GM10248 (cell line): ENCODE measurements at regions of chr5 and their contacts with region 1.

Region 1: GRCh38 chr5:160021831-160022446 is 13.0 kb downstream of the TTC1 start:
- DNase-seq: peak; percentile 59
- CTCF ChIP-seq: peak; percentile 69

Region 2: GRCh38 chr5:159951387-159951786 is 70.6 kb before region 1 on chr5:
- CTCF ChIA-PET with region 1: no interaction called
- POLR2A ChIA-PET with region 1: no interaction called
- DNase-seq: no peak
- CTCF ChIP-seq: no peak

Region 3: DNA sequence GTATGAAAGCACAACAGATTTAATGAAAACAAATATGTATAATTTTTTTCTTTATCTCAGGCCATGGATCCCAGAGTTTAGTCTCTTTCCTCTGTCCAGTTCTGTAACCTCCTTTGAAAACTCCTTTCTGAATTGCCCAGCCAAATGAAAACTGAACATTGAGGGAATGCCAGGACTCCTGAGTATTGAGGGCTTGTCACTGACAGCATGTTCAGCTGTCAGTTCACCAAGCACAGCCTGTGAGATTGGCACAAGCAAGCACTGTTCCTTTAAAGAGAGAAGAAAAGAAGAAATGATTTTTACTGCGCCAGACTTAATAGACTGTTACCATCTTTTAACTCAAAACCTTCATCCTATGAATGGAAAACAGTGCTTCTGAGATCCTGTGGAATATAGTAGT is 14.3 kb after region 1 on chr5:
- CTCF ChIA-PET with region 1: interaction called, 54 read pairs
- POLR2A ChIA-PET with region 1: no interaction called
- DNase-seq: no peak
- CTCF ChIP-seq: no peak

Region 4: DNA sequence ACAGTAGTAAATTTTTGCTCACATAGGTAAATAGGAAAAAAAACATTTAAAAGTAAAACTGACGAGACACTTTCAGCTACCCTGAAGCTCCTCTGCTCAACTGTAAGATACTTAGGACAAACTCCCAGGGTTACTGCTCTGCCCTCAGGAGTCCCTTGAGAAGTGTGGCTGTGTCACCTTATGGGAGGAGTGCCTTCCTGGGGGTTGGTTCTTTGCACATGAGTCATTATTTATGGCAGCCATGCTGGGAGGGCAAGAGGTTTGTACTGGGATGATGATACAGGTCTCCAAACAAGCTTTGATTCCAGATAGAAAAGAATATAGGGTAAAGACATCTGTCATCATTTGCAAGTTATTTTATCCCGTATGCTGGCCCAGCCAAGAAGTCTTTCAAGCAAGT is 32.9 kb after region 1 on chr5:
- CTCF ChIA-PET with region 1: interaction called, 20 read pairs
- POLR2A ChIA-PET with region 1: no interaction called
- DNase-seq: no peak
- CTCF ChIP-seq: no peak

Region 5: DNA sequence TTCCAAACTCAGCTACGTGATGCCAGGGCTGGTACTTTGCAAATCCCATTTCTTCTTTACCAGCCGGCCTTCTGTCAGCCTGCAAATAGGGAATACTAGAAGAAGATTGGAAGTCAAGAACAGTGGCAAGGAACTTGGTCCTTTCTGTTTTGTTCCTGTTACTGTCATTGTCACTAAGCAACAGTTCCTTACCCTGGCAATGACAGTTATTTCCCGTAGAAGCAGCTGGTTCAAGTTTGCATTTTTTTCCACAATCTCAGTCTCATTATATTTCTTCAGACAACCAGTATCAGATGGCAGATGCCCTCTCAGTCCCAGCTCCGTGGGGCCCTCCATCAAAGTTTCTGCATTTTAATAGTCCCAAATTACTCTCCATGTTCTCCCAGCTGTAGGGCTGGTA is 357.6 kb after region 1 on chr5:
- CTCF ChIA-PET with region 1: interaction called, 12 read pairs
- POLR2A ChIA-PET with region 1: no interaction called
- DNase-seq: no peak
- CTCF ChIP-seq: no peak